Activated CD8-positive, alpha-beta T cell treated with anti-CD3 and anti-CD28 coated beads, Interleukin-2, amount 10 ng/mL, durations not matched to agents 7 days and 5 days (primary cell): ENCODE measurements at regions of chrX and their contacts with region 1.

Region 1: GRCh38 chrX:152904151-152905080 is 6.5 kb downstream of the ZNF185 start:
- DNase-seq: peak; percentile 37
- ATAC-seq: peak; percentile 42
- H3K4me3 Mint-ChIP-seq: no peak overlapping the region
- H3K27ac Mint-ChIP-seq: no peak overlapping the region
- H3K4me1 Mint-ChIP-seq: no peaks in the 10 kb centered on the region
- H3K27me3 Mint-ChIP-seq: no peaks in the 10 kb centered on the region

Region 2: DNA sequence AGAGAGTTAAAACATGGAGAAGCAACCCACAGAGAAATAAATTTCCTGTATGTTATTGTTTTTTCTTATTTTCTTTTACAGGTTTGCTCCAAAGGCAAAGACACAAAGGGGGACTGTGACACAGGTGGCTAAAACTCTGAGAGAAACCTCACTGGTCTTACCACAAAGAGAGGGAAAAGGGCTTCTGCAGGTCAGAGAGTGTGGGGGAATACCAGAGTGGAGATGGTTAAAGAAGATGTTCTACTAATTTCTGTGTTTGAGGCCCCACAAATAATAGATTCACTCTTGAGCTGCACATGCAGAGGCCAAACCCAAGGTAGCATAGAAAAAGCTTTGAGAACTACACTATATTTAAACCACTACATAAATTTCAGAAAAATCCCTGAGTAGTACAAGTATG is 604.6 kb before region 1 on chrX:
- CTCF ChIA-PET with region 1: no interaction called
- POLR2A ChIA-PET with region 1: no interaction called
- DNase-seq: no peak
- ATAC-seq: no peak
- H3K4me3 Mint-ChIP-seq: no peak overlapping the region
- H3K27ac Mint-ChIP-seq: no peak overlapping the region
- H3K4me1 Mint-ChIP-seq: no peaks in the 10 kb centered on the region
- H3K27me3 Mint-ChIP-seq: no peaks in the 10 kb centered on the region

Region 3: DNA sequence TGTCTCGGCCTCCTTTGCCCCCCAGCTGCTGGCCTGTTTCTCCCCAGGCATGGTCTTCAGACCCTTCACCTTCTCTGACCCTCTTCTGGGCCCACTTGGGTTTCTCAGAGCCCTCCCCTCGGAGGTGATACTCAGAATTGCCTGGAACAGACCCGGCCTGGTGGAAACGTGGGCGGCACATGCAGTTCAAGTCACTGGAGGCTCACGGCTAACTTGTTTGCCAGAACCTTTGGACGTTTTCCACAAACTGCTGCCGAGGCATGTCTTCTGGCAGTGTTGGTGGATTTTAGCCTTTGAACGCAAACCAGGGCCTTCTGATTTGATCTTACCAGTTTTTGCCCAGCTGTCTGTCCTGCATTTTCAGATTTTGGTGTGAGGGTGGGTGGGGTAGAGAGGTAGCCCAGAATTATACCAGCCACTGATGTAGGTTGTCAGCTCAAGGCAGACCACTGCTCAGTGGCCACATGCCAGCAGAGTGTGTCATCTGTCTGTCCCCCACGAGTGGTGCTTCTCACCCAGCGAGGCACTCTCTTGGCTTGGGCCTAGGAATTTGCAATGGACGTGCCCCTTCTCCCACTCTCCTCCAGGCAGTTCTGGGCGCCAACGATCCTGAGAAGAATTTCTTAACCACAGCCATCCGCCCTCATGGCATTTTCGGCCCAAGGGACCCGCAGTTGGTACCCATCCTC is 39.0 kb before region 1 on chrX:
- CTCF ChIA-PET with region 1: no interaction called
- POLR2A ChIA-PET with region 1: no interaction called
- DNase-seq: no peak
- ATAC-seq: no peak
- H3K4me3 Mint-ChIP-seq: no peak overlapping the region
- H3K27ac Mint-ChIP-seq: no peak overlapping the region
- H3K4me1 Mint-ChIP-seq: no peaks in the 10 kb centered on the region
- H3K27me3 Mint-ChIP-seq: no peaks in the 10 kb centered on the region

Region 4: GRCh38 chrX:152892999-152893891 is 11.2 kb before region 1 on chrX:
- CTCF ChIA-PET with region 1: no interaction called
- POLR2A ChIA-PET with region 1: no interaction called
- DNase-seq: no peak
- ATAC-seq: no peak
- H3K4me3 Mint-ChIP-seq: no peak overlapping the region
- H3K27ac Mint-ChIP-seq: no peak overlapping the region
- H3K4me1 Mint-ChIP-seq: no peaks in the 10 kb centered on the region
- H3K27me3 Mint-ChIP-seq: peaks cover 38% of the 10 kb centered on the region

Region 5: DNA sequence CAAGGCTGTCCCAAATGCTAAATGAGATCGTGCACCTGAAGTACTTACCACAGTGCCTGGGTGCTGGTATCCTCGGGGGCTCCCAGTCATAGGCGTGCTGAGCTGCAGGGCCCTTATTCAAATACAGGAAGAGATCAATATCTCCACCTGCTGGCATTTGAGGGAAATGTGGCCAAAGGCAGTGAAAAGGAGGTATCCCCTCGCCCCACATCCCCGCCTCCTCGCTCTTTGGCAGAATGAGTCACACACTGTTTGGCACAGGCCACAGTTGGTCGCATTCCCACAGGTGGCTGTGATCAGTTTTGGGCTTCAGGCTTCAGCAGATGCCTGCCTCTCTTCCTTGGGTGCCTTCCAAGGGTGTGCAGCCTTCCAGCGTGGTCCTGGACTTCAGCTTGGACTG is 21.9 kb after region 1 on chrX:
- CTCF ChIA-PET with region 1: interaction called, 10 read pairs
- POLR2A ChIA-PET with region 1: no interaction called
- DNase-seq: peak; percentile 68
- ATAC-seq: peak; percentile 87
- H3K4me3 Mint-ChIP-seq: no peak overlapping the region
- H3K27ac Mint-ChIP-seq: no peak overlapping the region
- H3K4me1 Mint-ChIP-seq: peaks cover 18% of the 10 kb centered on the region
- H3K27me3 Mint-ChIP-seq: no peaks in the 10 kb centered on the region